ENCODE measurements at regions of chr10 and their contacts with region 1.

Region 1: DNA sequence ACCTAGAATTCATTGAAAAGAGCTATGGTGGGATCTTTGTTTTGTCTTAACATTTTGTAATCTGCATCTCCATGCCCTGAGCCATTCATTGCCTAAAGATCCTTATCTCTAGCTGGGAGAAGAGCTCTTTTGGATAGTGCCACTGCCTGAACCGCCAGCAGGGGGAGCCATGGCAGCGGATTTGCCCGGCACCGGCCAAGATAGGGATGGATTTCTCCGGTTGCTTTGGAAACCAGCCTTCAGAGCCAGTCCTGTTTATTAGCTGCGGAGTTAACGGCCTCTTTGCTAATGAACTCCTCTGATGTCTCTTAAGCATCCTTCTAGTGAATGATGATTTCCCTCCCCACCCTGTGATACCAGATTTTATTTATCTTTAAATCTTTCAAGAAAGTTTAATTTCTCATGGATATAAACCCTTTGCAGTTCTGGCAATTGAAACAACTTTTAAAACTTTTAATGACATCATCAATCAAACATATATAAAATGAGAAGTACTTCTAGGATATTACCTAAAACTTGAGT is 58.2 kb upstream of the LYZL2 start:
- DNase-seq: peak; percentile 81

Region 2: GRCh38 chr10:29496341-29497162 is 1191.2 kb before region 1 on chr10:
- in situ Hi-C with region 1: loop called (anchors 5 kb)
- DNase-seq: peak; percentile 53

Region 3: GRCh38 chr10:30476511-30477155 is 211.1 kb before region 1 on chr10:
- in situ Hi-C with region 1: no loop called
- DNase-seq: no peak

Measured in KBM-7 (cell line).